ENCODE measurements at regions of chr22 and their contacts with region 1.

Region 1: GRCh38 chr22:23849009-23850006 is 8.4 kb upstream of the SLC2A11 start:
- DNase-seq: peak; percentile 81 to 94 (median 85)
- ATAC-seq: peak; percentile 11 to 65 (median 56)
- H3K4me3 ChIP-seq: peak overlapping the region in 4 of 12 donors; percentile 5 to 27 (median 24)
- H3K27ac ChIP-seq: no peak overlapping the region
- H3K4me1 ChIP-seq: peaks cover 3 to 51% (median 31%) of the 10 kb centered on the region in 12 donors
- H3K27me3 ChIP-seq: no peaks in the 10 kb centered on the region
- CTCF ChIP-seq: peak; percentile 95 to 99 (median 98)
- POLR2A ChIP-seq: no peak

Region 2: DNA sequence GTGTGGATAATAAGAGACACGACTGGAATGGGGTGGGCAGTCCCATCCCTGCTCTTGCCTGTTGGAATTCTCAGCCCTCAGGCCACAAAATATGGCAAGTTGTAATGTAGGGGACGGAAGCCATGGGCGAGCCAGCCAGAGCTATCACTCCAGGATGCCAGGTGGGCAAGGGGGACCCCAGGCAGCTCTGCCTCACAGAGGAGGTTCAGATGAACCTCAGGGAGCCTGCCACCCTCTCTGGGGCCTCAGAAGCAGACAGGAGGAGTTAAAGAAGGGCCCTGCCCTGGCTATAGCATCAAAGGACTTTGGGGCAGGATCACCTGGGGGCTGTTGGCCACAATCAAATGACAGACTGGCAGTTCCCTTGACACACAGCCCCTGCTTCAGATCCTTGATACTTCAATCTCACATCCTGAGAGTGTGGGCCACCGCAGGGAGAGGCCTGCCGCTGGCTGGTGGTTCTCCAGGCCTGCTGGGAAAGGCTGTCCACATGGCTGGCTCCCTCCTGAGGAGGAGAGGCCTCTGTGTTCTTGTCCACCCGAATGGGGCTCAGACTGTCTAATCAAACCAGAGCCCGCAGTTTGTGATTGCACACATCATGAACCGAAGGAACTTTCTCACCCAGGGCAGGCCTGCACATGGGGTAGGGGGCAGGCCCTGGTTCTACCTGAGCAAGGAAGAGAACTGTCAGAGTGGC is 300.7 kb before region 1 on chr22:
- intact Hi-C with region 1: loop called (anchors 5 to 10 kb)
- DNase-seq: no peak
- ATAC-seq: no peak
- H3K4me3 ChIP-seq: no peak overlapping the region
- H3K27ac ChIP-seq: no peak overlapping the region
- H3K4me1 ChIP-seq: no peaks in the 10 kb centered on the region
- H3K27me3 ChIP-seq: peaks cover 0 to 15% (median 0%) of the 10 kb centered on the region in 9 donors
- CTCF ChIP-seq: no peak
- POLR2A ChIP-seq: no peak

Region 3: GRCh38 chr22:23767673-23768548 is 81.4 kb before region 1 on chr22 and contains the start of gene CHCHD10:
- intact Hi-C with region 1: loop called (anchors 1 to 5 kb)
- DNase-seq: peak; percentile 88 to 92 (median 90)
- ATAC-seq: peak; percentile 73 to 87 (median 82)
- H3K4me3 ChIP-seq: peak within 1 kb of the TSS; percentile 30 to 91 (median 66)
- H3K27ac ChIP-seq: peak within 1 kb of the TSS; percentile 82 to 97 (median 90)
- H3K4me1 ChIP-seq: peaks cover 0 to 70% (median 43%) of the 10 kb centered on the region in 12 donors
- H3K27me3 ChIP-seq: no peaks in the 10 kb centered on the region
- CTCF ChIP-seq: peak; percentile 73 to 92 (median 86)
- POLR2A ChIP-seq: peak; percentile 92 to 97
- total RNA-seq, gene CHCHD10: 374 to 1,458 (median 944) TPM

Region 4: DNA sequence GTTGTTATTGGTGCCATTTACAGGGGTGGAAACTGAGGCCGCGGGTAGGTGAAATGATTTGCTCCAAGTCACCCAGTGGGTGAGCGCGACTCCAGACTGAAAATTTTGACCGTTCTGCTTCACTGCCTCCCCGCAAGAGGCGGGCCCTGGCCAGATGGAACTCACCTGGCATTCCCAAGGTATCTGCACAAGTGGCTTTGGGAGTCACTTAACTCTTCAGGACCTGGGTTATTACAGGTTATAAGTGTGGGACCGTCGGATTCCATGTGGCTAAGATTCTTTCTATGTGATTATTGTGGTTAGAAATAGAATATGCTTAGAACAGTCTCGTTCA is 162.4 kb after region 1 on chr22:
- intact Hi-C with region 1: no loop called
- DNase-seq: no peak
- ATAC-seq: peak in 1 of 4 donors; percentile 1
- H3K4me3 ChIP-seq: peak overlapping the region; percentile 57 to 98 (median 94)
- H3K27ac ChIP-seq: peak overlapping the region; percentile 33 to 92 (median 84)
- H3K4me1 ChIP-seq: peaks cover 0 to 18% (median 12%) of the 10 kb centered on the region in 12 donors
- H3K27me3 ChIP-seq: no peaks in the 10 kb centered on the region
- CTCF ChIP-seq: no peak
- POLR2A ChIP-seq: no peak

Measured in heart left ventricle (tissue), 16 donors.